ENCODE measurements at regions of chr13 and their contacts with region 1.

Region 1: GRCh38 chr13:36395280-36395679 is 37.0 kb upstream of the CCNA1 start:
- DNase-seq: no peak

Region 2: DNA sequence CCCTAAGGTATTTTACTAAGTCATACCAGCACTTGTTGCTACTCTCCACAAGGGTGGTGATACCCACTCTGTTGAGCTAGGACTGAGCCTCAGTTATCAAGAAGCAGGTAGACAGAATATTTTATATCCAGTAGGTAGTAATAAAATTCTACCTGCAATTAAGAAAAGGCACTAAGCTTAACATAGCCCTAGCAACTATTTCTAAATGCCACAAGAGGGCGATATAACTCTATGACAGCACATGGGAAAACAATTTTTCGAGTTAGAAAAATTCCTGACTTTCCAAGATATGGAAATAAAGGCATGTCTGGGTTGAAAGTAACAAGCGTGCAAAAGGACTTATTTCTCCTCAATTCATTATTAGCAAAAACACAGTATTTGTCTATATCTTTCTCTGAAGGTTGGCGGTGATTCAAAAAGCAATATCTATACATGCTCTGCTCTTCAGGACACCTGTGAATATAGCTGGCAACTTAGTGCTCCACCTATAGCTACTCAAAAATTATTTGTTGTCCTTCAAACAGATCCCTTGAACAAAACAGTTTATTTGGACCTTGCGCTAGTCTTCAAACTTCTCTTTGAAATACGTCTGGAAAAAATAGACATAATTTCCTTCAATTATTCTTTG is 112.3 kb before region 1 on chr13:
- intact Hi-C with region 1: loop called (anchors 5 kb)
- DNase-seq: no peak

Region 3: DNA sequence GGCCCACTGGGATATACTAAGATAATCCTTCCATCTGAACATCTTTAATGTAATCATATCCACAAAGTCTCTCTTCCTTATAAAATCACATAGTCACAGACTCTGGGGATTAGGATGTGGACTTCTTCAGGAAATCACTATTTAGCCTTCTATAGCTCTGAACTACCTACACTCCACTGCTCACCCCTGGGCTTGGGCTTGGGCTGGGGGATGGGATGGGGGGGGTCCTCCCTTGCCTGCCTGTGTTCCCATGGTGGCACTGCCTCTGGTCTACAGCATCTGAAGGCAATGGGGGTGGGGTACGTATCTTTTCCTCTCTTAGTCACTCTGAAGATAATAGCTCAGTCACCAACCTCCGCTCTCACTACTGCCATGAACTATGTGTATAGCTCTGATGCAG is 210.8 kb after region 1 on chr13:
- intact Hi-C with region 1: no loop called
- DNase-seq: no peak